Activated CD8-positive, alpha-beta T cell treated with anti-CD3 and anti-CD28 coated beads for 36 hours (primary cell): ENCODE measurements at regions of chr13 and their contacts with region 1.

Region 1: GRCh38 chr13:75694722-75695121 is 58.6 kb downstream of the LMO7 start:
- DNase-seq: no peak
- ATAC-seq: no peak
- H3K4me3 Mint-ChIP-seq: no peak overlapping the region
- H3K27ac Mint-ChIP-seq: no peak overlapping the region
- H3K4me1 Mint-ChIP-seq: peaks cover 8% of the 10 kb centered on the region
- H3K27me3 Mint-ChIP-seq: no peaks in the 10 kb centered on the region
- CTCF ChIP-seq: no peak

Region 2: GRCh38 chr13:75704579-75705320 is 10.0 kb after region 1 on chr13:
- CTCF ChIA-PET with region 1: interaction called, 58 read pairs
- POLR2A ChIA-PET with region 1: no interaction called
- intact Hi-C with region 1: no loop called
- DNase-seq: no peak
- ATAC-seq: no peak
- H3K4me3 Mint-ChIP-seq: no peak overlapping the region
- H3K27ac Mint-ChIP-seq: no peak overlapping the region
- H3K4me1 Mint-ChIP-seq: peaks cover 14% of the 10 kb centered on the region
- H3K27me3 Mint-ChIP-seq: no peaks in the 10 kb centered on the region
- CTCF ChIP-seq: no peak

Region 3: GRCh38 chr13:75760131-75761021 is 65.7 kb after region 1 on chr13:
- CTCF ChIA-PET with region 1: interaction called, 45 read pairs
- POLR2A ChIA-PET with region 1: no interaction called
- intact Hi-C with region 1: loop called (anchors 10 kb)
- DNase-seq: peak; percentile 30
- ATAC-seq: peak; percentile 67
- H3K4me3 Mint-ChIP-seq: peak overlapping the region; percentile 67
- H3K27ac Mint-ChIP-seq: peak overlapping the region; percentile 82
- H3K4me1 Mint-ChIP-seq: peaks cover 70% of the 10 kb centered on the region
- H3K27me3 Mint-ChIP-seq: no peaks in the 10 kb centered on the region
- CTCF ChIP-seq: peak; percentile 46

Region 4: DNA sequence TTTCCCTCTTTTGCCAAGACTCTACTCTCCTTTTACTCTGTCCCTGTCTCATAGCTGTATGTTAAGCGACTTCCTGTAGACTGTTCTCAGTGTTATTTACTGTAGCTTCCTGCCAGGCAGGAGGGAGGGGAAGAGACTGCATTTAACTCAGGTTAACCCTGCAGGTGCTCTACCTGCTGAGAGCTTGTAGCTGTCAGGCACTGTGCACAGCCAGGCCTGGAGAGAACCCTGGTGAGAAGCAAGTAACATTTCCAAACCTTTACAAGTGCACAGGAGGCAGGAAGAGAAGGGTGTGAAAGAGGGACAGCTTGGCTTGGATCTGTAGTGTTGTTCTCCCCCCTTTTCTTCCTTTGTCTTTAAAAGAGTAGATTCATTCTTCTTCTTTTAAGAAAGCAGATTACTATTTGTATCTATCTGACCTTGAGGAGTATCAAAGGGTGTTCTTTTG is 108.5 kb after region 1 on chr13:
- CTCF ChIA-PET with region 1: interaction called, 38 read pairs
- POLR2A ChIA-PET with region 1: no interaction called
- intact Hi-C with region 1: loop called (anchors 5 kb)
- DNase-seq: peak; percentile 20
- ATAC-seq: peak; percentile 72
- H3K4me3 Mint-ChIP-seq: peak overlapping the region; percentile 11
- H3K27ac Mint-ChIP-seq: peak overlapping the region; percentile 78
- H3K4me1 Mint-ChIP-seq: peaks cover 45% of the 10 kb centered on the region
- H3K27me3 Mint-ChIP-seq: no peaks in the 10 kb centered on the region
- CTCF ChIP-seq: no peak

Region 5: GRCh38 chr13:75850916-75851315 is 156.2 kb after region 1 on chr13:
- CTCF ChIA-PET with region 1: interaction called, 20 read pairs
- POLR2A ChIA-PET with region 1: no interaction called
- intact Hi-C with region 1: no loop called
- DNase-seq: no peak
- ATAC-seq: no peak
- H3K4me3 Mint-ChIP-seq: no peak overlapping the region
- H3K27ac Mint-ChIP-seq: no peak overlapping the region
- H3K4me1 Mint-ChIP-seq: peaks cover 5% of the 10 kb centered on the region
- H3K27me3 Mint-ChIP-seq: no peaks in the 10 kb centered on the region
- CTCF ChIP-seq: no peak

Region 6: DNA sequence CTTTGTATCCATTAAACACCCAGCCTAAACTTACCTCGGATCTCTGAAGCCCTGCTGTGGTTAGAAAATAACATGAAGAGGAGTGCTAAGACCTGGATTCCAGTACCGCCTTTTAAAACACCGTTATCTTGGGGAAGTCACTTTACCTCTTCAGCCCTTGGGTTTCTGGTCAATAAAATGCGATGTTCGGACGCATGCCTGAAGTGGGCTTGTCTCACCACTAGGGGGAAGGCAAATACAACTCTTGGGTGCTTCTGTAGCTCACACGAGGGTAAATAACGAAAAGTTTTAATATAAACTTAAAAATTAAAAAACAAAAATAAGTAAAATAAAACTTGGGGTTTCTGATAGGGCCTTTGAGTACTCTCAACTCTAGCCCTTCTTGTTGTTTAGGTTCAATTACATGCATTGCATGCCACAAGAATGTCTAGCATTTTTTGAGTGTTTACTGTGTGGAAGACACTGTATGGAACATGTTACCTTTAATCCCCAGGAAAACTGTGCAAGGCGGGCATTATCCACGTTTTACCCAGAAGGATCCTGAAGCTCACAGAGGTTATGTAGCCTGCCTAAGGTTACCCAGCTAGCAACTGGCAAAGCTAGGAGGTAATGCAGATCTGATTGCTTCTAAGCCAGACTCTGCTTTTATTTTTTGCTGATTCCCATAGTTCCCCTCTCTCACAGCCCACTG is 181.8 kb after region 1 on chr13:
- CTCF ChIA-PET with region 1: interaction called, 94 read pairs
- POLR2A ChIA-PET with region 1: no interaction called
- intact Hi-C with region 1: loop called (anchors 5 kb)
- DNase-seq: peak; percentile 73
- ATAC-seq: peak; percentile 94
- H3K4me3 Mint-ChIP-seq: no peak overlapping the region
- H3K27ac Mint-ChIP-seq: no peak overlapping the region
- H3K4me1 Mint-ChIP-seq: peaks cover 3% of the 10 kb centered on the region
- H3K27me3 Mint-ChIP-seq: peaks cover 3% of the 10 kb centered on the region
- CTCF ChIP-seq: peak; percentile 90